ENCODE measurements at regions of chr13 and their contacts with region 1.

Region 1: GRCh38 chr13:59906413-59907049 is 257.2 kb downstream of the DIAPH3 start:
- DNase-seq: no peak
- H3K4me3 ChIP-seq: no peak overlapping the region
- H3K27ac ChIP-seq: no peak overlapping the region
- H3K4me1 ChIP-seq: no peaks in the 10 kb centered on the region
- H3K27me3 ChIP-seq: no peaks in the 10 kb centered on the region
- CTCF ChIP-seq: peak; percentile 42 to 51 (median 47)
- EP300 ChIP-seq: no peak
- POLR2A ChIP-seq: no peak

Region 2: DNA sequence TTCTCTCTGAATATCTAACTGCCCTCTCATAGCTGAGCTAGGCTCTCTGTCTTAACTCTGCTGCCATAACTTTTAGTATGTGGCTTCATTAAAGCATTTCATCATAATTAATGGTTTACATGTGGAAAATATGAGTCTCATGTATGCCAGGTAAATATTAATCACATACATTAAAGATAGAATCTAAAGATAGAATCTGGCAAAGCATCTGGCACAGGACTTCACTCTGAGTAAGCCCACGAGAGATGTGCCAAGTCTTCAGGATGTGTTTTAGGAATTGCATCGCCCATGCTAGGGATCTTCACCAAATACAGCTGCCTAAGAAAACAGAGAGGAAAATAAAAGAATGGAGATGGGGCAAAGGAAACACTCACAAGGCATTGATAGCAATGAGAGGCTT is 28.6 kb before region 1 on chr13:
- in situ Hi-C with region 1: no loop called
- intact Hi-C with region 1: loop called (anchors 1 kb)
- DNase-seq: no peak
- H3K4me3 ChIP-seq: no peak overlapping the region
- H3K27ac ChIP-seq: no peak overlapping the region
- H3K4me1 ChIP-seq: no peaks in the 10 kb centered on the region
- H3K27me3 ChIP-seq: no peaks in the 10 kb centered on the region
- CTCF ChIP-seq: no peak
- EP300 ChIP-seq: no peak
- POLR2A ChIP-seq: no peak